Endothelial cell of umbilical vein (primary cell): ENCODE measurements at regions of chr1 and their contacts with region 1.

Region 1: GRCh38 chr1:197868751-197869489 is 33.5 kb upstream of the C1orf53 start:
- DNase-seq: peak; percentile 56
- H3K4me3 ChIP-seq: no peak overlapping the region
- H3K27ac ChIP-seq: no peak overlapping the region
- H3K4me1 ChIP-seq: no peaks in the 10 kb centered on the region
- H3K27me3 ChIP-seq: no peaks in the 10 kb centered on the region
- CTCF ChIP-seq: peak; percentile 54 to 59
- POLR2A ChIP-seq: no peak

Region 2: GRCh38 chr1:197521118-197521739 is 347.7 kb before region 1 on chr1:
- CTCF ChIA-PET with region 1: interaction called, 40 read pairs
- POLR2A ChIA-PET with region 1: no interaction called
- dilution Hi-C with region 1: no loop called
- intact Hi-C with region 1: loop called (anchors 1 kb)
- DNase-seq: peak; percentile 46
- H3K4me3 ChIP-seq: no peak overlapping the region
- H3K27ac ChIP-seq: no peak overlapping the region
- H3K4me1 ChIP-seq: no peaks in the 10 kb centered on the region
- H3K27me3 ChIP-seq: no peaks in the 10 kb centered on the region
- CTCF ChIP-seq: peak; percentile 39 to 51
- POLR2A ChIP-seq: no peak

Region 3: GRCh38 chr1:197526736-197527371 is 342.1 kb before region 1 on chr1:
- CTCF ChIA-PET with region 1: interaction called, 40 read pairs
- POLR2A ChIA-PET with region 1: no interaction called
- dilution Hi-C with region 1: no loop called
- intact Hi-C with region 1: loop called (anchors 1 kb)
- DNase-seq: peak; percentile 31
- H3K4me3 ChIP-seq: no peak overlapping the region
- H3K27ac ChIP-seq: no peak overlapping the region
- H3K4me1 ChIP-seq: no peaks in the 10 kb centered on the region
- H3K27me3 ChIP-seq: no peaks in the 10 kb centered on the region
- CTCF ChIP-seq: peak; percentile 16 to 18
- POLR2A ChIP-seq: no peak

Region 4: GRCh38 chr1:197614916-197615692 is 253.8 kb before region 1 on chr1:
- CTCF ChIA-PET with region 1: interaction called, 156 read pairs
- POLR2A ChIA-PET with region 1: no interaction called
- dilution Hi-C with region 1: no loop called
- intact Hi-C with region 1: loop called (anchors 1 kb)
- DNase-seq: peak; percentile 55
- H3K4me3 ChIP-seq: no peak overlapping the region
- H3K27ac ChIP-seq: no peak overlapping the region
- H3K4me1 ChIP-seq: no peaks in the 10 kb centered on the region
- H3K27me3 ChIP-seq: no peaks in the 10 kb centered on the region
- CTCF ChIP-seq: peak; percentile 51 to 57
- POLR2A ChIP-seq: no peak

Region 5: DNA sequence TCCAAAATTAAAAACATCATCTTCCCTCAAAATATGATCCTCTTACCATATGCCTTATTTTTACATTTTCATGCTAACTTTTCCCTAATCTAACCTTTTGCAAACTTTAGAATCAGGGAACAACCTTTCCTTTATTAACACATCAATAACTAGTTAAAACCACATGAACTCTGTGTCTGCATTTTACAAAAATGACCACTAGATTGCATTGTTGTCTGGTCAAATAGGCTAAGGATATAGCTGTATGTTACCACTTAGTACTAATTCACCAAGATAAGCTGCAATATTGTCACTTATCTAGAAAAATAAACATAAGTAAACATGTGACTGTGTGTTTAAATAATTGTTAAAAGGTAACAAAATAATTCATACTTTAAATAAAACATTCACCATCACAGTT is 176.0 kb before region 1 on chr1:
- CTCF ChIA-PET with region 1: interaction called, 29 read pairs
- POLR2A ChIA-PET with region 1: no interaction called
- dilution Hi-C with region 1: no loop called
- intact Hi-C with region 1: loop called (anchors 2 kb)
- DNase-seq: peak; percentile 23
- H3K4me3 ChIP-seq: no peak overlapping the region
- H3K27ac ChIP-seq: no peak overlapping the region
- H3K4me1 ChIP-seq: peaks cover 6% of the 10 kb centered on the region
- H3K27me3 ChIP-seq: no peaks in the 10 kb centered on the region
- CTCF ChIP-seq: no peak
- POLR2A ChIP-seq: no peak

Region 6: GRCh38 chr1:197924516-197925123 is 55.7 kb after region 1 on chr1:
- CTCF ChIA-PET with region 1: interaction called, 6 read pairs
- POLR2A ChIA-PET with region 1: no interaction called
- dilution Hi-C with region 1: no loop called
- intact Hi-C with region 1: loop called (anchors 1 kb)
- DNase-seq: peak; percentile 58
- H3K4me3 ChIP-seq: no peak overlapping the region
- H3K27ac ChIP-seq: no peak overlapping the region
- H3K4me1 ChIP-seq: peaks cover 3% of the 10 kb centered on the region
- H3K27me3 ChIP-seq: peaks cover 27 to 33% of the 10 kb centered on the region in 2 experiments
- CTCF ChIP-seq: peak; percentile 60 to 63
- POLR2A ChIP-seq: no peak